Activated CD4-positive, alpha-beta T cell treated with anti-CD3 and anti-CD28 coated beads for 36 hours (primary cell): ENCODE measurements at regions of chr5 and their contacts with region 1.

Region 1: GRCh38 chr5:143355720-143356119 is 47.8 kb downstream of the NR3C1 start:
- DNase-seq: peak; percentile 59
- ATAC-seq: peak; percentile 34
- H3K4me3 Mint-ChIP-seq: no peak overlapping the region
- H3K27ac Mint-ChIP-seq: no peak overlapping the region
- H3K4me1 Mint-ChIP-seq: peaks cover 77% of the 10 kb centered on the region
- H3K27me3 Mint-ChIP-seq: no peaks in the 10 kb centered on the region

Region 2: GRCh38 chr5:143002459-143003328 is 353.0 kb before region 1 on chr5:
- CTCF ChIA-PET with region 1: interaction called, 3 read pairs
- POLR2A ChIA-PET with region 1: no interaction called
- intact Hi-C with region 1: loop called in 1 of 2 experiments (anchors 5 kb)
- DNase-seq: peak; percentile 78
- ATAC-seq: peak; percentile 92
- H3K4me3 Mint-ChIP-seq: peak overlapping the region; percentile 17
- H3K27ac Mint-ChIP-seq: peak overlapping the region; percentile 93
- H3K4me1 Mint-ChIP-seq: peaks cover 50% of the 10 kb centered on the region
- H3K27me3 Mint-ChIP-seq: no peaks in the 10 kb centered on the region

Region 3: DNA sequence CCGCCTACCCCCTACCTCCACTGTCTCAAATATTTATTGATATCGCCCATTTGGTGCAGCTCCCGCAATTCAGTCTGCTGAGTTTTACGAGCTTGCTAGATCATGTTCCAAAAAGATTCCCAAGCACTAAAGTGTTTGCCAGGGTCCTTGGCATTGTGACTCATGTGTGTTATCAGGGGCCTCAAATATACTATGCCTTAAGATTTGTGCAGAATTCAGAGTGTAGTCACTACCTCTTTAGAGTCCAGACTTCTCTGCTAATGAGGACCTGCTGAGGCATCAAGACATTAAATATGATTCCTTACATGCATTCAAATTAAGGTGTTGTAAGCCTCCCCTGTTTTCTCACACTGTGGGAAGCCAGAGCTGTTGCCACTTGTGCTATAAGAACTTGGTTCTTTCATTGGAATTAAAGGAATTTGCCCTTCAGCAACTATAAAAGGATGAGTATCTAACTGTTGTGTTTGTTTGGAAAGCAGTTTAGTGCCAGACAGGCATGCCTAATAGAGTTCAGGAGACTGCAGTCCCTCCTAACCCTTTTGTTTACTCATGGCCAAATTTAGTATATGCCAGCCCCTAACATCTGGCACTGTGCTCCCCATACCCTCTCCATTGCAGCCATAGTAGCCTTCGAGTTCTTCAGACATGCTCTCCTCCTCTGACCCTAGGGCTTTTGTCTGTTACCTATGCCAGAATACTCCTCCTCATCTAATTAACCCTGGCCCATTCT is 268.6 kb before region 1 on chr5:
- CTCF ChIA-PET with region 1: no interaction called
- POLR2A ChIA-PET with region 1: no interaction called
- intact Hi-C with region 1: no loop called
- DNase-seq: no peak
- ATAC-seq: no peak
- H3K4me3 Mint-ChIP-seq: no peak overlapping the region
- H3K27ac Mint-ChIP-seq: no peak overlapping the region
- H3K4me1 Mint-ChIP-seq: peaks cover 6% of the 10 kb centered on the region
- H3K27me3 Mint-ChIP-seq: no peaks in the 10 kb centered on the region

Region 4: DNA sequence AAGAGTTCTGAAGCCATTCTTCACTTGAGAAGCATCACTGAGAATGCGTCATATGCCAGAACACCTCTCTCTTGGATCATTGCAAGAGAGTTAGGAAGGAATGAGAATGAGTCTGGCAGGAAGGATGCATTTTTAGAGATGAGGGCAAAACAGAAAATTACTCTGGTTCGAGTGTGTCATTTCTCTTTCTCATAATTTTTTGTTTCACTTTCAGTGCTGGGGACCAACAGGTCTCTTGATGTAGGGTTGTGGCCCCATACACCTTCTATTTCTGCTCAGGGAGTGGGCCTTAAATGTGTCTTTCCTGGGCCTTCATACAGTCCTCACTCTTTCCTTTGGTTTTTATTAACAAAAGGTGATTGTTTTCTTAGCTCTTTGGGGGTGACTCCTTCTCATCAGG is 254.6 kb before region 1 on chr5:
- CTCF ChIA-PET with region 1: no interaction called
- POLR2A ChIA-PET with region 1: no interaction called
- intact Hi-C with region 1: loop called in 1 of 2 experiments (anchors 5 kb)
- DNase-seq: no peak
- ATAC-seq: peak; percentile 81
- H3K4me3 Mint-ChIP-seq: peak overlapping the region; percentile 7
- H3K27ac Mint-ChIP-seq: peak overlapping the region; percentile 68
- H3K4me1 Mint-ChIP-seq: peaks cover 31% of the 10 kb centered on the region
- H3K27me3 Mint-ChIP-seq: no peaks in the 10 kb centered on the region

Region 5: DNA sequence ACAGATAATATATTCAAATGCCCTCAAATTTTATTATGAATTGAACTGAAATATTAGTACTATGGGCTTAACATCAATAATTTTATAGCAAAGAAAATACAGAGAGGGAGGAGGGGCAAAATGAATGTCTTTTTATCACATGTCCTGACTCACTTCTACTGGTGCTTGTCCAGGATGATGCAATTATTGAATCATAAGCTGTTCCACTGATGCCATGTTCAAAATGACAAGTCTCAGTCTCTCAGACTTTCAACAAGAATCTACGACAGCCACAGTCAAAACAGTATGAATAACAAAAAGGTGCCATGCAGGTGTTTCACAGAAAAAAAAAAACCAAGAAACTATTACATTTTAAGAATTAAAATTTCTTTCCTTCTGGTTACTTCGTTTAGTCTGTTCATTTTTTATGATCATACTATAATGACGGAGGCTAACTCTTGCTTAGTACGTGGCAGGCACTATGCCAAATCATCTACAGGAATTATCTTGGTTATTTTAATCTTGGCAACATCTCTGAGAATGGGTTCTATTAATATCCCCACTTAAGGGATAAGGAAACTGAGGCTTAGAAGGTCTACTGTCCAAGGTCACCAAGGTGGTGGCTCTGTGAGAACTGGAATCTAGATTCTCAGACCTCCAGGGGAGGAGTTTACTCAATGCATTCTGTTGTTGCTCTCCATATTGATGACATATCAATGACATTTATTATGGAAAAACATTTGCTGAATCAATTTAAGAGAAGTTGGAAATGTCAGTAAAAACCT is 13.7 kb before region 1 on chr5:
- CTCF ChIA-PET with region 1: interaction called, 3 read pairs
- POLR2A ChIA-PET with region 1: interaction called, 7 read pairs
- intact Hi-C with region 1: loop called in 1 of 2 experiments (anchors 1 kb)
- DNase-seq: no peak
- ATAC-seq: peak; percentile 89
- H3K4me3 Mint-ChIP-seq: no peak overlapping the region
- H3K27ac Mint-ChIP-seq: peak overlapping the region; percentile 85
- H3K4me1 Mint-ChIP-seq: peaks cover 51% of the 10 kb centered on the region
- H3K27me3 Mint-ChIP-seq: no peaks in the 10 kb centered on the region

Region 6: DNA sequence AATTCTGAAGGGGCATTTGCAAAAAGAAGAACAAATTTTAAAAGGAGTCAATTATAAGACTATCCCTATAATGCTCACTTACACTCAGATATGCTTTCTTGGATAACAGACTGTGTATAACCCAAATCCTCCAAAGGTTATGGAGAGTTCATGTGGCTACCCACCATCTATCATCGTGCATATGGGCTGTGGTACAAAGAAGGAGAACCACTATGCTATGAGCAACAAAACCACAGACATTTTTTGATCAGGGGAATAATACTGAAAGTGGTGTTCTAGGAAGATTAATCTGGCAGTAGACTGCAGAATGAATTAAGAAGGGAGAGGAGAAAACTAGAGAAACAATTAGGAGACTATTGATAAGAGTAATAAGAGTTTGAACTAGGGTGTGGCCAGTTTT is 31.0 kb after region 1 on chr5:
- CTCF ChIA-PET with region 1: interaction called, 5 read pairs
- POLR2A ChIA-PET with region 1: interaction called, 3 read pairs
- intact Hi-C with region 1: loop called (anchors 1 to 2 kb)
- DNase-seq: peak; percentile 27
- ATAC-seq: peak; percentile 89
- H3K4me3 Mint-ChIP-seq: no peak overlapping the region
- H3K27ac Mint-ChIP-seq: no peak overlapping the region
- H3K4me1 Mint-ChIP-seq: peaks cover 76% of the 10 kb centered on the region
- H3K27me3 Mint-ChIP-seq: no peaks in the 10 kb centered on the region

Region 7: GRCh38 chr5:143648696-143649095 is 293.0 kb after region 1 on chr5:
- CTCF ChIA-PET with region 1: no interaction called
- POLR2A ChIA-PET with region 1: no interaction called
- intact Hi-C with region 1: loop called in 1 of 2 experiments (anchors 5 kb)
- DNase-seq: peak; percentile 26
- ATAC-seq: no peak
- H3K4me3 Mint-ChIP-seq: no peak overlapping the region
- H3K27ac Mint-ChIP-seq: no peak overlapping the region
- H3K4me1 Mint-ChIP-seq: peaks cover 17% of the 10 kb centered on the region
- H3K27me3 Mint-ChIP-seq: no peaks in the 10 kb centered on the region